ENCODE measurements at regions of chr12 and their contacts with region 1.

Region 1: GRCh38 chr12:121417847-121418246 is 17.9 kb downstream of the RNF34 start:
- DNase-seq: no peak
- ATAC-seq: no peak
- H3K4me3 Mint-ChIP-seq: no peak overlapping the region
- H3K27ac Mint-ChIP-seq: no peak overlapping the region
- H3K4me1 Mint-ChIP-seq: no peaks in the 10 kb centered on the region
- H3K27me3 Mint-ChIP-seq: no peaks in the 10 kb centered on the region
- CTCF ChIP-seq: no peak

Region 2: DNA sequence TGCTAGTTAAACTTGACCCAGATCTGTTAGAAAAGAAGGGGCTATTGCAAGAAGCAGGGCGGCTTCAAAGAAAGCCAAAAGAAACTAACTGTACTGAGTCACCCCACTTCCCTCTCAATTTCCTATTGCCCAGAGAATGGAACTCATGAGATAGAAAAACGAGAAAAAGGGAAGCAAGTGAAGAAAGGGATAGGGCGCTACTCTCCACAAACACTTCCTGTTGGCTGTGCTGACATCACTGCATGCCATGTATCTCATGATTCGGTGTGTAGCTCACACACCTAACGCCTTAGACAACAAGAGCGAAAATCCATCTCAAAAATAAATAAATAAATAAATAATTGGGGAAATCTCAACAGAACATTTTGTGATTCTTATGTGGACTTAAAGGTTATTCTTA is 220.9 kb before region 1 on chr12:
- CTCF ChIA-PET with region 1: no interaction called
- POLR2A ChIA-PET with region 1: no interaction called
- DNase-seq: no peak
- ATAC-seq: no peak
- H3K4me3 Mint-ChIP-seq: no peak overlapping the region
- H3K27ac Mint-ChIP-seq: no peak overlapping the region
- H3K4me1 Mint-ChIP-seq: no peaks in the 10 kb centered on the region
- H3K27me3 Mint-ChIP-seq: no peaks in the 10 kb centered on the region
- CTCF ChIP-seq: no peak

Region 3: GRCh38 chr12:121399391-121400331 is 18.2 kb before region 1 on chr12 and contains the start of gene RNF34:
- CTCF ChIA-PET with region 1: interaction called, 3 read pairs
- POLR2A ChIA-PET with region 1: interaction called, 10 read pairs
- DNase-seq: peak; percentile 99
- ATAC-seq: peak; percentile 96
- H3K4me3 Mint-ChIP-seq: peak within 1 kb of the TSS; percentile 90
- H3K27ac Mint-ChIP-seq: peak within 1 kb of the TSS; percentile 96
- H3K4me1 Mint-ChIP-seq: peaks cover 21% of the 10 kb centered on the region
- H3K27me3 Mint-ChIP-seq: no peaks in the 10 kb centered on the region
- CTCF ChIP-seq: no peak
- total RNA-seq, gene RNF34: 42.8 to 53.6 TPM (median 51.0 TPM) in 3 replicates